AG04449 (cell line): ENCODE measurements at regions of chr3 and their contacts with region 1.

Region 1: GRCh38 chr3:45210308-45211041 is 15.6 kb downstream of the TMEM158 start:
- DNase-seq: no peak
- H3K4me3 ChIP-seq: no peak overlapping the region
- CTCF ChIP-seq: peak; percentile 94

Region 2: GRCh38 chr3:45055411-45056143 is 154.9 kb before region 1 on chr3:
- CTCF ChIA-PET with region 1: interaction called, 14 read pairs
- POLR2A ChIA-PET with region 1: no interaction called
- DNase-seq: no peak
- H3K4me3 ChIP-seq: no peak overlapping the region
- CTCF ChIP-seq: peak; percentile 5

Region 3: DNA sequence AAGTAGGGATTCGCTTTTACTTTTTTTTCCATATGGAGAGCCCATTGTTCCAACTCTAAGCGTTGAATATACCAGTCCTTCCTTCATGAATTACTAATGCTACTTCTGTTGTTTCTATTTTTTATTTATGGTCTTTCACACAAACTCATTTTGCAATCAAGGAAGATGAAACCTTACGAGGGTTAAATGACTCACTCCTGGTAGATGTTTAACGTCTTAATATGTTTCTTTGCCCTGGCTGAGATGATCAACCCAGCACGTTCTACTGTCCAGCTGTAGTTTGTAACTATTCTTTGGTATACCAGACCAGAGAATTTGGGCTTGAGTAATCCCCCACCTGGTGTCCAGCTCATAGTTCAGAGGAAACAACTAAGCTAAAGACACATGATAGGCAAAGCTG is 87.4 kb before region 1 on chr3:
- CTCF ChIA-PET with region 1: interaction called, 13 read pairs
- POLR2A ChIA-PET with region 1: no interaction called
- DNase-seq: peak; percentile 78
- H3K4me3 ChIP-seq: no peak overlapping the region
- CTCF ChIP-seq: no peak

Region 4: GRCh38 chr3:45182915-45183867 is 27.3 kb before region 1 on chr3:
- CTCF ChIA-PET with region 1: interaction called, 16 read pairs
- POLR2A ChIA-PET with region 1: no interaction called
- DNase-seq: no peak
- H3K4me3 ChIP-seq: no peak overlapping the region
- CTCF ChIP-seq: no peak

Region 5: GRCh38 chr3:45199837-45200648 is 10.4 kb before region 1 on chr3:
- CTCF ChIA-PET with region 1: interaction called, 22 read pairs
- POLR2A ChIA-PET with region 1: no interaction called
- DNase-seq: peak; percentile 50
- H3K4me3 ChIP-seq: peak overlapping the region; percentile 15
- CTCF ChIP-seq: no peak

Region 6: DNA sequence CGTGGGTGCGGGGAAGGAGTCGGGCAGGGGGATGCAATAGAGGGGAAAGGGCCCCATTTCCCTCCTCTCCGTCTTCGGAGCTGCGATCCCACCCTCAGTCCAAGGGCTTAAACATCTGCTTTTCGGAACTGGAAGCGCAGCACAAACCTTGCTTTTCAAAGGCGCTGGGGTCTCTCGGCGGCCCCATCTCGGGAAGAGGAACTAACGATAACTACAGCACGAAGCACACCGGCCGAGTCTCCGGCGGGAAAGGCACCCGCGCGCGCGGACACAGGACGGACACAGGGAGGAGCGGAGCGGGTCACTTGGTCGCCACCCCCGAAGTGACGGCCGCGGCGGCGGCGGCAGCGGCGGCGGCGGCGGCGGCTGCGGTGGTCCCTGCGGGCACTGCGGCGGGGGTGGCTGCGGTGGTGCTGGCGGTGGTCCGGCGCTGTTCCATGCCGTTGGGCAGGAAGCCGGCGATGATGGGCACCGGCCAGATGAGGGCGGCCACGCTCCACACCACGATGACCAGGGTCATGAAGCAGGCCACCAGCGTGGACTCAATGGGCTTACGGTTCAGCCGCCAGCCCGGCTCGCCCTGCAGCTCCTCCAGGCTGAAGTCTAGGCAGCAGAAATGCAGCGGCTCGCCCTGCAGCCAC is 14.5 kb after region 1 on chr3:
- CTCF ChIA-PET with region 1: interaction called, 54 read pairs
- POLR2A ChIA-PET with region 1: no interaction called
- DNase-seq: no peak
- H3K4me3 ChIP-seq: peak overlapping the region; percentile 75
- CTCF ChIP-seq: peak; percentile 86